ENCODE measurements at regions of chr1 and their contacts with region 1.

Region 1: GRCh38 chr1:154404984-154405761 is at the start of gene IL6R:
- DNase-seq: peak; percentile 63
- CTCF ChIP-seq: peak; percentile 62

Region 2: GRCh38 chr1:154221278-154222001 is 183.7 kb before region 1 on chr1:
- CTCF ChIA-PET with region 1: no interaction called
- POLR2A ChIA-PET with region 1: no interaction called
- DNase-seq: peak; percentile 69
- CTCF ChIP-seq: no peak

Region 3: DNA sequence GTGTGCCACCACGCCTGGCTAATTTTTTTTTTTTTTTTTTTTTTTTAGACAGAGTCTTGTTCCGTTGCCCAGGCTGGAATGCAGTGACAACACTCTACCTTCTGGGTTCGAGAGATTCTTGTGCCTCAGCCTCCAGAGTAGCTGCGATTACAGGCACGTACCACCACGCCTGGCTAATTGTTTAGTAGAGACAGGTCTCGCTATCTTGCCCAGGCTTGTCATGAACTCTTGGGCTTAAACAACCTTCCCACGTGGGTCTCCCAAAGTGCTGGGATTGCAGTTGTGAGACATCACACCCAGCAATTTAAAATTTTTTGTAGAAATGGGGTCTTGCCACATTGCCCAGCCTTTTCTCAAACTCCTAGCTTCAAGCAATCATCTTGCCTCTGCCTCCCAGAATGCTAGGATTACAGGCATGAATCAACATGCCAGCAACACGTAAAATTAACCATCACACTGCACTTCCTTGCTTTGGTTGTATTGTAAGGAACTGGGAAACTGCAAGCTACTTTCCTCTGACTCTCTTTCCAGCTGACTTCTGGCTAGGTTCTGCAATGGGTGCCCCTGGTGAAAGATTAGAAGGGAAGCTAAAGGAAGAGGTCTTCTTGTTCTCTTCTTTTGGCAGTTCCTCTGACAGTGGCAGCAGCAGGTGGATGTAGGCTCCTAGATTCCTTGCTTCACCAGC is 13.9 kb before region 1 on chr1:
- CTCF ChIA-PET with region 1: interaction called, 12 read pairs
- POLR2A ChIA-PET with region 1: no interaction called
- DNase-seq: no peak
- CTCF ChIP-seq: no peak

Region 4: GRCh38 chr1:154418062-154418921 is 13.1 kb after region 1 on chr1:
- CTCF ChIA-PET with region 1: interaction called, 26 read pairs
- POLR2A ChIA-PET with region 1: no interaction called
- DNase-seq: no peak
- CTCF ChIP-seq: no peak